ENCODE measurements at regions of chr5 and their contacts with region 1.

Region 1: GRCh38 chr5:61331407-61332357 is at the start of gene ZSWIM6:
- DNase-seq: peak; percentile 99
- H3K4me3 ChIP-seq: peak within 1 kb of the TSS; percentile 94 to 98
- H3K27ac ChIP-seq: peak within 1 kb of the TSS; percentile 94
- H3K4me1 ChIP-seq: peaks cover 36% of the 10 kb centered on the region
- H3K27me3 ChIP-seq: no peaks in the 10 kb centered on the region
- CTCF ChIP-seq: no peak
- POLR2A ChIP-seq: peak; percentile 56 to 96
- total RNA-seq, gene ZSWIM6: 16.7 TPM

Region 2: DNA sequence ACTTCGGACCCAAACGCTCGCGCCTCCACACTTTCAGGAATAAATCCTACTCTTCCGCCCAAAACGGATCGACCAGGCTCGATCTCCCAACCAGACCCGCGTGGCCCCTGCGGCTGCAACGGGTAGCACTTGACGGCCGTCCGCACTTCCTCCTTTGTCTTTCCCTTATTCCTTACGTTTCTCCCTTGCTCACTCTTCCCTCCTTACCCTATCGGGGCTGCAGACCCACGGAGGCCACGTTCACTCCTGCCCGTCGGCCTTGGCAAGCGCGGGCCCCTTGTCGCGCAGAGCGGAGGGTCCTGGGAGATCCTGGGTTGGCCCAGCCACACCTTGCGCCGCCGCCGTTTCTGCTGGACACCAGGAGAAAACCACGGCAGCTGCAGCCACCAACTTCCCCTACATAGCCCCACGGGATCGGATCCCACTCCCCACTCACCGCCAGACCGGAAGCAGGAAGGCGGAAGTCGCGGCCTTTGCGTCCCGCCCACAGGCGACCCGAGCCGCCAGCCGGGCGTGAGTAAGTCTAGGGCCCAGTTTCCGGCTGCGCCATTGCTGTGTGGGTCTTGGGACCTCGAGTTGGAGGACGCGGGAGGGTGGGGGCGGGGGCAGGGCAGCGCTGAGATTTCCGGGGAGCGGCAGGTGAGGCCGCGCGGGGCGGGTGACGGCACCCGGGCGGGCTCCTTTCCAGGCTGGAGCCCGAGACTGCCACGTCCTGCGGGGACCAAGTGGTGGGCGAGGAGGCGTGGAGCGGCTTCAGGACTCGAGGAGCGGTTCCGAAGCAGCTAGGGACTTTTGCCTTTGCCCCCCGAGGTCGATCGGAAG is 169.5 kb before region 1 on chr5 and contains the start of gene SMIM15:
- intact Hi-C with region 1: loop called (anchors 10 kb)
- DNase-seq: peak in 1 of 2 donors; percentile 91
- H3K4me3 ChIP-seq: peak within 1 kb of the TSS; percentile 84 to 94
- H3K27ac ChIP-seq: peak within 1 kb of the TSS; percentile 94
- H3K4me1 ChIP-seq: peaks cover 33% of the 10 kb centered on the region
- H3K27me3 ChIP-seq: no peaks in the 10 kb centered on the region
- CTCF ChIP-seq: no peak
- POLR2A ChIP-seq: no peak
- total RNA-seq, gene SMIM15: 33.1 TPM

Region 3: GRCh38 chr5:61394078-61394704 is 62.5 kb after region 1 on chr5:
- intact Hi-C with region 1: no loop called
- DNase-seq: no peak
- H3K4me3 ChIP-seq: no peak overlapping the region
- H3K27ac ChIP-seq: no peak overlapping the region
- H3K4me1 ChIP-seq: peaks cover 19% of the 10 kb centered on the region
- H3K27me3 ChIP-seq: no peaks in the 10 kb centered on the region
- CTCF ChIP-seq: no peak
- POLR2A ChIP-seq: no peak

Region 4: DNA sequence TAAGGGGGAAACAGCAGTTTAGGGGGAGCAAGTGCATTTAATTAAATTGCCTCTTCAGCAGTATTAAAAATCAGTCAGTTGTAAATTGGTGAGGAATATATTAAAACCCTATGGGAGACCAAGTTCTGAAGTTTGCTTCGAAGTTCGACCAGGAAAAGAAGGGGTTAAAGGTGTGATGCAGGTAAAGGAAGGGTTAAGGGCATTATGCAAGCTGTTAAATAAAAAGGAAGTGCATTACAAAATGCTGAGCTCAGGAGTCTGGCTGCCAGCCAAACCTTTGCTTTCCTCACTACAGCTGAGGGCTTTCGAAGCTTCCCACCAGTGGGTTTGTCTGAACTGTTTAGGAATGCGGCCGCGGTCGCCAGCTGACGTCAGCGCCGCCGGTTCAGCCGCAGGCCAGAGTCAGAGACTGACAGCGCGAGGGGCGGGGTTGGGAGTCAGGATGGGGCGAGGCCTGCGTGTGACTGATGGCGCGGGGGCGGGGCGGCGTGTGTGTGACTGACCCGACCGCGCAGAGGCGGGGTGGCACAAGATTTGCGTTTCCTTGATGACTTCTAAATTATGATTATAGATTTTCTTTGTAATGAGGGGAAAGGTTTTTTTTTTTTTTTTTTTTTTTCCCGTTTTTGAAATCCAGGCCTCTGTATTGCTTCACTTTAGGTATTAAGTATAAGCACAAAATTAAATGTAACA is 76.9 kb after region 1 on chr5:
- intact Hi-C with region 1: loop called (anchors 5 kb)
- DNase-seq: peak; percentile 99
- H3K4me3 ChIP-seq: peak overlapping the region in 1 of 2 donors; percentile 21
- H3K27ac ChIP-seq: peak overlapping the region; percentile 62
- H3K4me1 ChIP-seq: peaks cover 37% of the 10 kb centered on the region
- H3K27me3 ChIP-seq: no peaks in the 10 kb centered on the region
- CTCF ChIP-seq: no peak
- POLR2A ChIP-seq: no peak

Region 5: GRCh38 chr5:61419141-61419540 is 87.5 kb after region 1 on chr5:
- intact Hi-C with region 1: no loop called
- DNase-seq: no peak
- H3K4me3 ChIP-seq: no peak overlapping the region
- H3K27ac ChIP-seq: no peak overlapping the region
- H3K4me1 ChIP-seq: peaks cover 23% of the 10 kb centered on the region
- H3K27me3 ChIP-seq: no peaks in the 10 kb centered on the region
- CTCF ChIP-seq: no peak
- POLR2A ChIP-seq: no peak